ENCODE measurements at regions of chr12 and their contacts with region 1.

Region 1: GRCh38 chr12:63955831-63956609 is 111.5 kb downstream of the SRGAP1 start:
- DNase-seq: peak; percentile 78
- H3K4me3 Mint-ChIP-seq: peak overlapping the region; percentile 39
- H3K27ac Mint-ChIP-seq: peak overlapping the region; percentile 88
- H3K4me1 Mint-ChIP-seq: peaks cover 31% of the 10 kb centered on the region
- H3K27me3 Mint-ChIP-seq: no peaks in the 10 kb centered on the region
- CTCF ChIP-seq: no peak

Region 2: DNA sequence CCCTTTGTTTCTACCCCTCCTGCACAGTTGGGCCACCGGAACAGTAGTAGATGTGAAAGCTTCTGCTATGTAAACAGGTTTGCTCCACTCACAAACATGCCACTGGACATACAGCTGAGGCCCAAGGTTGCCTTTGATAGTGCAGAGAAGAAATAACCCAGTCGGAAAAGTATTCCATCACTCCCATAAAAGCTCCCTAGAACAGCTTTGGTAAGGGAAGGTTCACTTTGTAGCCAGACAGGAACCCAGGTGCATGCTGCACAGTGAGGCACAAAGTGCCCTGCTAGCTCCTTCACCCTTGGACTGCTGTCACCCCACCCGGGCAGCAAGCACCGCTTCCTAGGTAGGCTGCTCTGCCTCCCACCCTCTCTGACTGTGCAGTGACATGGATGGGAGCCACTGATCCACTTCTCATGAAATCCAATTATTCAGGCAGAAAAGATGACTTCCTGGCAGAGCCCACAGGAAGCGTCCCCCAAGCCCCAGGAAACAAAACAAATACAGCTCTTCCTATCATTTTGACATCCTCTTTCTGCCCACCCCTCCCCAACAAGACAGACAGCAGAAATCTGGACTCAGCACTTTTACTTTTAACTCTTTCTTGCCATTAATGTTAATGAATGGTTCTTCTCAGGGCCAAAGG is 11.3 kb before region 1 on chr12:
- CTCF ChIA-PET with region 1: interaction called, 3 read pairs
- POLR2A ChIA-PET with region 1: interaction called, 21 read pairs
- intact Hi-C with region 1: no loop called
- DNase-seq: no peak
- H3K4me3 Mint-ChIP-seq: no peak overlapping the region
- H3K27ac Mint-ChIP-seq: peak overlapping the region; percentile 77
- H3K4me1 Mint-ChIP-seq: peaks cover 32% of the 10 kb centered on the region
- H3K27me3 Mint-ChIP-seq: no peaks in the 10 kb centered on the region
- CTCF ChIP-seq: no peak

Region 3: DNA sequence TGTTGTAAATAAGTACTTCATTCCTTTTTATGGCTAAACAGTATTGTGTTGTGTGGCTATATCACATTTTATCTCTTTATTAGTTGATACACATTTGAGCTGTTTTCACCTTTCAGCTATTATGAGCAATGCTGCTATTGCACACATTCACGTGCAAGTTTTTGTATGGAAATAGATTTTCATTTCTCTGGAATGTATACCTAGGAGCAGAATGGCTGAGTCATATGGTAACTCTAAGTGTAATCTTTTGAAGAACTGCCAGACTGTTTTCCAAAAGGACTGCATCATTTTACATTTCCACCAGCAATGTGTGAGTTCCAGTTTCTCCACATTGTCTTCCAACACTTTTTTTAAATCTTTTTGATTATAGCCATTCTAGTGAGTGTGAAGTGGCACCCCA is 22.5 kb after region 1 on chr12:
- CTCF ChIA-PET with region 1: no interaction called
- POLR2A ChIA-PET with region 1: interaction called, 17 read pairs
- intact Hi-C with region 1: no loop called
- DNase-seq: peak; percentile 87
- H3K4me3 Mint-ChIP-seq: no peak overlapping the region
- H3K27ac Mint-ChIP-seq: peak overlapping the region; percentile 75
- H3K4me1 Mint-ChIP-seq: peaks cover 17% of the 10 kb centered on the region
- H3K27me3 Mint-ChIP-seq: no peaks in the 10 kb centered on the region
- CTCF ChIP-seq: no peak

Region 4: DNA sequence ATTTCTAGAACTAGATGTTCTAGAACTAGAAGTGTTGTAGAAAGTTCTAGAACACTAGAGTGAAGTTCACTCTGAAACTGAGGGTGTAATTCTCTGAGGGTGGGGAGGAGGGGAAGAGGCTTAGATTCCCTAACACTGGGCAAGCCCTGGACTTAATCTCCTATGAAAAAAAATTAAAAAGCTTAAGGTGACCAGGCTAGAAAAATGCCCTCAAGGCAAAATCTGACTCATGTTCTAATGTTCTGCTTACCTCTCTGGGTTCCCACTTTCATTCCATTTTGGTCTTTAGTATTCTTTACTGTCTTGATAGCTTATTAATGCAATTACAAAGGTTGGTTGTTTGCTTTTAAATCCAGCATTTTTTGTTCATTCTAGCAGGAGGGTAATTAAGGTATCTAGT is 164.6 kb after region 1 on chr12:
- CTCF ChIA-PET with region 1: no interaction called
- POLR2A ChIA-PET with region 1: no interaction called
- intact Hi-C with region 1: no loop called
- DNase-seq: peak; percentile 75
- H3K4me3 Mint-ChIP-seq: no peak overlapping the region
- H3K27ac Mint-ChIP-seq: peak overlapping the region; percentile 86
- H3K4me1 Mint-ChIP-seq: peaks cover 20% of the 10 kb centered on the region
- H3K27me3 Mint-ChIP-seq: no peaks in the 10 kb centered on the region
- CTCF ChIP-seq: no peak

Measured in MCF 10A (cell line).